ENCODE measurements at regions of chr1 and their contacts with region 1.

Region 1: GRCh38 chr1:161192476-161193465 is 6.1 kb downstream of the ADAMTS4 start:
- DNase-seq: peak; percentile 68
- H3K4me3 ChIP-seq: no peak overlapping the region
- H3K27ac ChIP-seq: no peak overlapping the region
- H3K4me1 ChIP-seq: no peaks in the 10 kb centered on the region
- H3K27me3 ChIP-seq: no peaks in the 10 kb centered on the region
- CTCF ChIP-seq: peak; percentile 79

Region 2: GRCh38 chr1:160315359-160315758 is 877.4 kb before region 1 on chr1:
- intact Hi-C with region 1: no loop called
- DNase-seq: no peak
- H3K4me3 ChIP-seq: no peak overlapping the region
- H3K27ac ChIP-seq: no peak overlapping the region
- H3K4me1 ChIP-seq: no peaks in the 10 kb centered on the region
- H3K27me3 ChIP-seq: no peaks in the 10 kb centered on the region
- CTCF ChIP-seq: no peak

Region 3: DNA sequence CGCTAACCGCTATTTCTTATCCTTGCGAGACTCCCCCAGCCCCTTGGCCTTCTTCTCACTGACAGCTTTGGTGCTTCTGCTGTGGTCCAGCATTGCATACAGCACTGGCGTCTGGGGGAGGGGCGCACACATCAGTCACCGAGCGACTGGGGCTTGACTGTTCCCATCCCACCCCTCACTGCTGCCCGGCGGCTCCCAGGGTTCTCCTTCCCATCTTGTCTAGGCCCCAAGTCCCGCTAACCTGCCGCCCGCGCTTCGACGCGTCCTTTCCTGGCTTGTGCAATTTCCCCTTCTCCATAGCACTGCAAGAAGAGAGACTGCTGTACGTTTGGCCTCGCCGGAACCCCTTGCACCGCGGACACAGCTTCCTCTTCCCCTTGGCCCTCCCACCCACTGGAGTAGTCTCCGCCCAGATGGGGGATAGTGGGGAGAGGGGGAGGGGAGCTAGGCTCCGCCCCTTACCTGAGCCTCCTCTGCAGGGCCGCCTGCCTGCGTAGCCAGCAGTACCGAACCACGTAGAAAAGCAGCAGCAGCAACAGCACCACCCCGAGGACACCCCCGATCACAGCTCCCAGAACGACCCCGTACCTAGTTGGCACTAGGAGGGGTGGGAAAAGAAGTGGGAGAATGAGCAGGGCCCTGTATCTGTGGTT is 113.2 kb after region 1 on chr1:
- intact Hi-C with region 1: loop called (anchors 10 kb)
- DNase-seq: peak; percentile 90
- H3K4me3 ChIP-seq: peak overlapping the region; percentile 63
- H3K27ac ChIP-seq: peak overlapping the region; percentile 27
- H3K4me1 ChIP-seq: no peaks in the 10 kb centered on the region
- H3K27me3 ChIP-seq: no peaks in the 10 kb centered on the region
- CTCF ChIP-seq: no peak

Region 4: DNA sequence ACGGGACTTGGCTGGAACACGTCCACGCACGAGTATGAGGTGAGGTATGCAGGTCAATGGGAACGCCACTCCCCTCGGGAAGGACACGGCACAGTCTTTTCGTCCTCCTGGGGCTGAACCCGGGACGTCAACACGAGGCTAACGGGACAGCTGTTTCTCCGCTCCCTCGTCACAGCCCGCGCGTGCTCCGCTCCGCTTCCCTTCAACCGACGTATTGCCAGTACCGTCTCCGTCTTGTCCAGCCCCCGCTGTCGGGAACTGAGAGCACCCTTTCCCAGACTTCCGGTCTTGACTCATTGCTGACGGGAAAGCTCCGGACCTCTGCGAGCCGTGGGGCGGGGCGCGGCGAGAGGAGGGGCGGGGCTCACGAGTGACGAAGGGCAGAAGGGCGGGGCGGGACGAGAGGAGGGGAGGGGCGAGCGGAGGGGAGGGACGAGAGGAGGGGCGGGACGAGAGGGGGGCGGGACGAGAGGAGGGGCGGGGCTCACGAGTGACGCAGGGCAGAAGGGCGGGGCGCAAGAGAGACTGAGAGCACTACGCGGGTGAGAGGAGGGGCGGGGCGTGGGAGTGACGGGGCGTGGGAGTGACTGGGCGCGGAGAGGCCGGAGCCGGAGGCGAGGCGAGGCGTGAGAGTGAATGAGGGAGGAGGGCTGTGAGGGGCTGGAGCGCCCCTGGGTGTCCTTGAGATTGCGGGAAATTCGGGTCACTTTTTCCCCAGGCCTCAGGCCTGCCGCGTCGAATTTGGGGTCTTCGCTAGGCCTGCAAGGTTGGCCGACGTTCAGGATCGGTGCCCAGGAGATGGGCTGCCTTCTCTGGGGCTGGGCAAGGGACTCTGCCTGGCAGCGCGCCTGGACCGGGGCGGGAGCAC is 197.2 kb after region 1 on chr1:
- intact Hi-C with region 1: loop called (anchors 10 kb)
- DNase-seq: peak; percentile 99
- H3K4me3 ChIP-seq: peak overlapping the region; percentile 54
- H3K27ac ChIP-seq: peak overlapping the region; percentile 81
- H3K4me1 ChIP-seq: no peaks in the 10 kb centered on the region
- H3K27me3 ChIP-seq: no peaks in the 10 kb centered on the region
- CTCF ChIP-seq: no peak

Measured in colonic mucosa (tissue), 4 donors.